ENCODE measurements at regions of chr9 and their contacts with region 1.

Region 1: GRCh38 chr9:113446323-113446740 is 17.2 kb upstream of the RGS3 start:
- DNase-seq: peak; percentile 72
- H3K4me3 ChIP-seq: no peak overlapping the region; a peak in 1 of 4 replicates
- H3K27ac ChIP-seq: no peak overlapping the region
- H3K4me1 ChIP-seq: no peaks in the 10 kb centered on the region
- H3K27me3 ChIP-seq: no peaks in the 10 kb centered on the region
- CTCF ChIP-seq: peak; percentile 77
- EP300 ChIP-seq: no peak
- RAD21 ChIP-seq: peak; percentile 94

Region 2: GRCh38 chr9:113410207-113410864 is 36.0 kb before region 1 on chr9 and contains the starts of genes C9orf43 and POLE3:
- CTCF ChIA-PET with region 1: interaction called, 10 read pairs
- POLR2A ChIA-PET with region 1: no interaction called
- DNase-seq: peak; percentile 94
- H3K4me3 ChIP-seq: peak within 1 kb of the TSS; percentile 81 to 88
- H3K27ac ChIP-seq: peak within 1 kb of the TSS; percentile 96
- H3K4me1 ChIP-seq: peaks cover 0 to 7% of the 10 kb centered on the region in 2 experiments; a peak in 1 of 4 replicates
- H3K27me3 ChIP-seq: no peaks in the 10 kb centered on the region
- CTCF ChIP-seq: 0 out of 2 replicates have a peak, but pooled peaks have one; percentile 12
- EP300 ChIP-seq: peak; percentile 7 to 24; a peak in 1 of 4 replicates
- RAD21 ChIP-seq: no peak
- polyA plus RNA-seq, gene C9orf43: 0.47 and 0.58 TPM in 2 replicates
- polyA plus RNA-seq, gene POLE3: 40.1 and 48.3 TPM in 2 replicates

Region 3: DNA sequence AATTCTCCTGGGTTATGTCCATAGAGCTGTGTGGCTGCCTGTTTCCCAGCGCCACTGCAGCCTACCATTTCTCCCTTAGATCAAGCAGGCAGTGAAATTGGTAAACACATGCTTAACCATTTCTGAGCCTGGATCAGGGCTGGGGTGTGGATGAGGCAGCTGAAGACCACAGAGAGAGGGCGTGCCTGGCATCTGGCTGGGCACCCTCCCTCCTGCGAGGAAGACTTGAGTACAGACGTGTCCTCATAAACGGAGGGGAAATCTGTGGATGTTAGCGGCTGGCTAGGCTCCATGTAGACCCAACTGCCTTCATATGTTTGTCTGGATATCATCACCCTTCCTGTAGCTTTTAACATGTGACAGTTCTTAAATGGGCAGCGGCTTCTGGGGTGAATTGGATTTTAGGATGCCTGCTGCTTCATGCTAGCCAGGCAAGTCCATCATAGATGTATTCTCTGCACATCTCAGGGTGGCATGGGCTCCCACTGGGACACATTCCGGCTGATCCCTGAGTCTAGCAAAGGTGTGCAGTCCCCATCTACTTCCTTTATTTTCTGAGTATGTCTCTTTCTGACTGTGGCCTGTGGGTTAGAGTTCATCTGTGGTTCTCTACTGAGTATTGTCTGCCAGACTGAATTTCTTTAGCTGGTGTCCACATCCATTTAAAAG is 28.2 kb after region 1 on chr9:
- CTCF ChIA-PET with region 1: interaction called, 16 read pairs
- POLR2A ChIA-PET with region 1: no interaction called
- DNase-seq: peak; percentile 60
- H3K4me3 ChIP-seq: no peak overlapping the region
- H3K27ac ChIP-seq: peak overlapping the region in 1 of 2 experiments; percentile 77; a peak in 2 of 4 replicates
- H3K4me1 ChIP-seq: peaks cover 0 to 25% of the 10 kb centered on the region in 2 experiments; a peak in 2 of 4 replicates
- H3K27me3 ChIP-seq: no peaks in the 10 kb centered on the region
- CTCF ChIP-seq: no peak
- EP300 ChIP-seq: peak in 1 of 2 experiments; percentile 59; a peak in 1 of 4 replicates
- RAD21 ChIP-seq: no peak

Region 4: DNA sequence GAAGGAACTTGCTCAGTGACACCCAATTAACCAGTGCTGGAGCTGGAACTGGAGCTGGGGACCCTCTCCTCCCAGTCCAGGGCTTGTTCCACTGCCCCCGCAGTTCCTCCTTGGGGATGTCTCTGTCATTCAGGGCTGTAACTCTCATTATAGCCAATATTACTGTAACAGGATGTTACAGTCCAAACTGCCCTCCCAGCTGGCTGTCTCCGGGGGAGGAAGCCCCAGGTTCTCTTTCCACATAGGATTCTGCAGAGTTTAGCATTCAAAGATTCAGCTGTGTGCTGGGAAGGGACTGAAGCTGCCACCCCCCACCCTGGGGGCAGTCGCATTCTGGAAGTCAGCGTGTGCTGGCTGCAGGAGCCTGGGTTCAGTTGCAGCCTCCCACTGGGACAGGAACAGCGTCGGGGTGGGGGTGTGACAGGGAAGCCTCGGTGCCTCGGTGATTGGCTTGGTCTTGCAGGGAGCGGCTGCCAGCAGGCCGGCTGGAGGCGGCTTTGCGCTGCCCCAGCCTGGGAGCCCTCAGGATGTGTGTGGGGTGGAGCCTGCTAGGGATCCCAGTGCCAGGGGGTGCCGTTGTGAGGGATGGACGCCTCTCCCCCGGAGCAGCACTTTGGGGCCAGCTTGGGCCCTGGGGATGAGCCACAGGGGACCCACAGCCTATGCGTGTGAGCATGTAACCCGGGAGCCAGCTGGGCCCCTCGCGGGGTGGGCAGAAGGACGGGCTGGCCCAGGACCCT is 118.3 kb after region 1 on chr9:
- CTCF ChIA-PET with region 1: interaction called, 19 read pairs
- POLR2A ChIA-PET with region 1: interaction called, 3 read pairs
- DNase-seq: peak; percentile 69
- H3K4me3 ChIP-seq: no peak overlapping the region
- H3K27ac ChIP-seq: no peak overlapping the region
- H3K4me1 ChIP-seq: peaks cover 0 to 39% of the 10 kb centered on the region in 2 experiments; a peak in 2 of 4 replicates
- H3K27me3 ChIP-seq: no peaks in the 10 kb centered on the region
- CTCF ChIP-seq: no peak
- EP300 ChIP-seq: no peak
- RAD21 ChIP-seq: no peak

Measured in SK-N-SH (cell line).